GM12878 (cell line): ENCODE measurements at regions of chr1 and their contacts with region 1.

Region 1: DNA sequence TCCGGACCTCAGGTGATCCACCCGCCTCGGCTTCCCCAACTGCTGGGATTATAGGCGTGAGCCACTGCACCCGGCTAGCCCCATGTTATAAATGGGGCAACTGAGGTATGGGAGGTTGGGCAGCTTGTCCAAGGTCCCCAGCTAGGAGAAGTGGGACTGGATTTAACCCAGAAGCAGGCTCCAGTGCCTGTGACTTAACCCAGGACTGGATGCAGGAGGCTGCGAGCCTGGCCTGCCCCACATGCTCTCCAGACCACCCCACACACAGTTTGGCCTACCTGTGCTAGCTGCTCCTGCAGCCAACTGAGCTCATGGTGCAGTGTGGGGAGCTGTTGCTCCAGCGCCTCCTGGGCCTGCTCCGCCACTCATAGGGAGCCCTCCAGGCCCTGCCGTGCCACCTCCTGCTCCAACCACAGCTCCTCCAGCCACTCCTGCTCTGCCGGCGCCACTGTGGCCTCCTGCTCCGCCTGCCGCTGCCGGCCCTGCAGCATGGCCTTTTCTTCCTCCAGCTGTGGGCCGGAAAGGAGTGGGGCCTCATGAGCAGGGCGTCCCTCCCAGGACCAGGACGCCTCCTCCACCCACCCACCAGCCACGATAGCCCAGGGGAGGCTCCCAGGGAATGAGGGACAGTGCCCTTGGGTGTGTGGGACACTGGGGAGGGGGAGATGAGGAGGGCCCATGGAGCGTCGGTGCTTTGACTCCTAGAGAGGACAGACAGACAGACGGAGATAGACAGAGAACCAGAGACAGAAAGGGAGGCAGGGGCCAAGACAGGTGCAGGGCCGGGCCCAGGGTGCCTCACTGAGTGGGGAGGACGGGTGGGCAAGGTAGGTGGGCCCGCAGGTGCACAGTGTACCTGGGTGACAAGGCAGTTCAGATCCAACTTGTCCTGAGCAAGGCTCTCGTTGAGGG is 12.4 kb upstream of the NBPF1 start:
- DNase-seq: no peak
- ATAC-seq: no peak
- H3K4me3 ChIP-seq: no peak overlapping the region
- H3K27ac ChIP-seq: no peak overlapping the region
- H3K4me1 ChIP-seq: no peaks in the 10 kb centered on the region
- H3K27me3 ChIP-seq: no peaks in the 10 kb centered on the region
- CTCF ChIP-seq: no peak
- EP300 ChIP-seq: no peak
- POLR2A ChIP-seq: peak; percentile 39; the same call in 1 of the 2 replicates
- RAD21 ChIP-seq: no peak

Region 2: GRCh38 chr1:16498573-16499413 is 127.0 kb before region 1 on chr1:
- CTCF ChIA-PET with region 1: no interaction called
- POLR2A ChIA-PET with region 1: no interaction called
- RAD21 ChIA-PET with region 1: no interaction called
- SMC1A ChIA-PET with region 1: no interaction called
- in situ Hi-C with region 1: no loop called
- intact Hi-C with region 1: no loop called
- DNase-seq: peak; percentile 32
- ATAC-seq: peak; percentile 98
- H3K4me3 ChIP-seq: peak overlapping the region; percentile 87
- H3K27ac ChIP-seq: no peak overlapping the region
- H3K4me1 ChIP-seq: peaks cover 3% of the 10 kb centered on the region; the same call in 1 of the 2 replicates
- H3K27me3 ChIP-seq: no peaks in the 10 kb centered on the region; a peak in 1 of 4 replicates
- CTCF ChIP-seq: peak in 1 of 3 experiments; percentile 26; a peak in 2 of 6 replicates
- EP300 ChIP-seq: no peak
- POLR2A ChIP-seq: peak; percentile 61; the same call in 1 of the 2 replicates
- RAD21 ChIP-seq: no peak

Region 3: DNA sequence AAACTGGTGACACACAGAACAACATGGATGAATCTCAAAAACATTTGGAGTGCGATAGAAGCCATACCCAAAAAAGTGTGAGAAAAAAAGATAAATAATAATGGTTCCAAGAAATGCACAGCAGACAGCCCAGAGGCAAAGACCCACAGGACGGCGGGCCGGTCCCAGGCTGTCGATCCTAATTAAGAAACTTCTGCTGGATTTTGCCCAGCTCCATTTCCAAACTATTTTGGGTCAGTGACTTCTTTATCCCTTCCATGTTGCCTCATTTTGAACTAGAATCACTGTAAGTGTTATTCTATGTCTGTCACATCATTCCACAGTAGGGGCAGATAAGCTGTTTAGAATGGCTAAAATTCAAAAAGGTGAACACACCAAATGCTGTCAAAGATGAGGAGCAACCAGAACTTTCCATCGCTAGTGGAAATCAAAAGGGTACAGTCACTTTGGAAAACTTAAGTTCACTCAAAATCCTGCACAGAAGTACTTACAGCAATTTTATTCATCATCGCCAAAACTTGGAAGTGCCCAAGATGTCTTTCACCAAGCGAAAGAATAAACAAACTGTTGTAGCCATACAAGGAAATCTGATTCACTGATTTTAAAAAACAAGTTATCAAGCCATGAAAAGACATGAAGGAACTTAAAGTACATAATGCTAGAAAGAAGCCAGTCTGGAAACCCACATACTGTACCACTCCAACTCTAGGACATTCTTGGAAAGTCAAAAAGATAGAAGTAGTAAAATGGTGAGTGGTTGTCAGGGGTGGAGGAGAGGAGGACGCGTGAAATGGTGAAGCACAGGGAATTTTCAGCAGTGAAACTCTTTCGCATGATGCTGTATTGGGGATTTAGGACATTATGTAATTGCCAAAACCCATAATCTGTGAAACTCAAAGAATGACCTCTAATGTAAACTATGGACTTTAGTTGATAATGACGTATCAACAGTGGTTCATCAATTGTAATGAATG is 19.9 kb before region 1 on chr1:
- CTCF ChIA-PET with region 1: interaction called, 18 read pairs
- POLR2A ChIA-PET with region 1: interaction called, 3 read pairs
- RAD21 ChIA-PET with region 1: interaction called, 3 read pairs
- SMC1A ChIA-PET with region 1: interaction called, 16 read pairs
- in situ Hi-C with region 1: no loop called
- intact Hi-C with region 1: no loop called
- DNase-seq: no peak
- ATAC-seq: no peak
- H3K4me3 ChIP-seq: no peak overlapping the region
- H3K27ac ChIP-seq: no peak overlapping the region
- H3K4me1 ChIP-seq: no peaks in the 10 kb centered on the region
- H3K27me3 ChIP-seq: no peaks in the 10 kb centered on the region
- CTCF ChIP-seq: no peak
- EP300 ChIP-seq: no peak
- POLR2A ChIP-seq: no peak
- RAD21 ChIP-seq: no peak

Region 4: DNA sequence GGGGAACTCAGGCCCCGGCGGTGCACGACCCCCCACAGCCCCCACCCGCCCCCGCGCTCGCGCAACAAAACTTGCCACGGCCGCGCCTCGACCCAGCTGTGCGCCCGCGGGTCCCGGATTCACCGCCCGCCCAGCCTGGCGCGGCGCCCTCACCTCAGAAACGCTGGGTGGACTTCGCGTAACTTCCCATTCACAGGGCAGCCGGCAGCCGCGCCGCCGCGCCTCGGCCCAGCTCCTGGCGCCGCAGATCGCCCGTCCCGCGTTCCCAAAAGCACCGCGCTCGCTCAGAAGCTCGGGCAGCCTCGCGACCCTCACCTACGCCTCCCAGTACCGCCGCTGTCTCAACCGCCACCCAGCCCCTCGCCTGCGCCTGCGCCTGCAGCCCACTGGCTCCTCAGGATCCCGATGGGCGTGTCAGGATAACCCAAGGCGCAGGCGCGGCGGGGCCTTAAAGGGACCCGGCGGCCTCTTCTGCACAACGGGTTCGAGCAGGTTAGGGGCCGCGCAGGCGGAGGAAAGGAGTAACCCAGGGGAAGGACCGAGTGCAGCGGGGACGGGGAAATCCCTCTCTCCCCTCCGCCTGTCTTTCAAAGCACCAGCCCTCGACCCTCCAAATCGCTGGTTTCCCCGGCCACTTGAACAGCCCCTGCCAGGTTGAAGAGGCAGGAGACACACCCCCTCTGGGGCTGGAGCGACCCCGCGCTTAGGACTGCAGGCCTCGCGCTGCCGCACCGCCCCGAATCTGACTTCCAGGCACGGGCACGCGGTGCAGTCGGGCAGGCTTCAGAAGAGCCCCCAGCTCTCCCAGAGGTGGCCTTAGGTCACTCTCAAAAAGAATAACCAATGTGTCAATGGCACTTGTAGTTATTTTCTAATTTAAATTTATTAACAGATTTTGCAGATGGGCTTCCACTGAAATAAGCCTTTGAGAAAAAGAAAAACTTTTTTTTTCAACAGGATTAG is 12.3 kb before region 1 on chr1 and contains the start of gene NBPF1:
- CTCF ChIA-PET with region 1: interaction called, 23 read pairs
- POLR2A ChIA-PET with region 1: interaction called, 4 read pairs
- RAD21 ChIA-PET with region 1: interaction called, 3 read pairs
- SMC1A ChIA-PET with region 1: interaction called, 16 read pairs
- in situ Hi-C with region 1: no loop called
- intact Hi-C with region 1: no loop called
- DNase-seq: peak; percentile 56
- ATAC-seq: peak; percentile 99
- H3K4me3 ChIP-seq: peak within 1 kb of the TSS; percentile 73
- H3K27ac ChIP-seq: no peak within 1 kb of the TSS
- H3K4me1 ChIP-seq: peaks cover 4% of the 10 kb centered on the region
- H3K27me3 ChIP-seq: peaks cover 13 to 18% of the 10 kb centered on the region in 2 experiments
- CTCF ChIP-seq: peak in 1 of 3 experiments; percentile 7; a peak in 1 of 6 replicates
- EP300 ChIP-seq: no peak
- POLR2A ChIP-seq: peak; percentile 74; the same call in 1 of the 2 replicates
- RAD21 ChIP-seq: no peak
- polyA plus RNA-seq, gene NBPF1: 0.20 to 0.34 TPM

Region 5: GRCh38 chr1:16946646-16947045 is 320.9 kb after region 1 on chr1:
- CTCF ChIA-PET with region 1: interaction called, 40 read pairs
- POLR2A ChIA-PET with region 1: no interaction called
- RAD21 ChIA-PET with region 1: interaction called, 33 read pairs
- SMC1A ChIA-PET with region 1: interaction called, 9 read pairs
- in situ Hi-C with region 1: no loop called
- intact Hi-C with region 1: loop called (anchors 1 kb)
- DNase-seq: no peak
- ATAC-seq: no peak
- H3K4me3 ChIP-seq: no peak overlapping the region
- H3K27ac ChIP-seq: no peak overlapping the region
- H3K4me1 ChIP-seq: no peaks in the 10 kb centered on the region
- H3K27me3 ChIP-seq: no peaks in the 10 kb centered on the region
- CTCF ChIP-seq: no peak
- EP300 ChIP-seq: no peak
- POLR2A ChIP-seq: no peak
- RAD21 ChIP-seq: no peak

Region 6: DNA sequence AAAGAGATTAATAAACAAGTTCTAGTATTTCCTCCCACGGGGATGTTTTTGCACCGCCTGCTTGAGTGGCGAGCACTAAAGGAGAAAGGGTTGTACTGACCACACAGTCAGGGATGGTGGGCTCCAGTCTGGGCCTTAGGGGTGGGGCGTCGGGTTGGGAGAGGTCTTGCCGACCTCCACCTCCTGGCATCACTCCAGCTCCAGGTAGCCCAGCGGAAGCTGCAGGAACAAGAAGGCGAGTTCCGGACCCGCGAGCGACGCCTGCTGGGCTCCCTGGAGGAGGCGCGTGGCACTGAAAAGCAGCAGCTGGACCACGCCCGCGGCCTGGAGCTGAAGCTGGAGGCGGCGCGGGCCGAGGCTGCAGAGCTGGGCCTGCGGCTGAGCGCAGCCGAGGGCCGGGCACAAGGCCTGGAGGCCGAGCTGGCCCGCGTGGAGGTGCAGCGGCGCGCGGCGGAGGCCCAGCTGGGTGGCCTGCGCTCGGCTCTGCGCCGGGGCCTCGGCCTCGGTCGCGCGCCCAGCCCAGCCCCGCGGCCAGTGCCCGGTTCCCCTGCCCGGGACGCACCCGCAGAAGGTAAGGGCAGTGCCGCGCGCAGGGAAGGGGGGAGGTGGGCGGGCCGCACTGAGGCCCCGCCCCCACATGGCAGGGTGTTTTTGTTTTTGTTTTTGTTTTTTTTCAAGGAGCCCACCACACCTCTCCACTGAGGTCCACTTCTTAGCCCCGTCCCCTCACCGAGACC is 335.0 kb after region 1 on chr1:
- CTCF ChIA-PET with region 1: interaction called, 33 read pairs
- POLR2A ChIA-PET with region 1: no interaction called
- RAD21 ChIA-PET with region 1: interaction called, 16 read pairs
- SMC1A ChIA-PET with region 1: interaction called, 4 read pairs
- in situ Hi-C with region 1: no loop called
- intact Hi-C with region 1: no loop called
- DNase-seq: peak; percentile 7
- ATAC-seq: peak; percentile 95
- H3K4me3 ChIP-seq: peak overlapping the region; percentile 43; the same call in 1 of the 2 replicates
- H3K27ac ChIP-seq: no peak overlapping the region
- H3K4me1 ChIP-seq: no peaks in the 10 kb centered on the region
- H3K27me3 ChIP-seq: no peaks in the 10 kb centered on the region
- CTCF ChIP-seq: peak; percentile 69 to 85 (median 70)
- EP300 ChIP-seq: no peak
- POLR2A ChIP-seq: no peak
- RAD21 ChIP-seq: peak; percentile 44

Region 7: DNA sequence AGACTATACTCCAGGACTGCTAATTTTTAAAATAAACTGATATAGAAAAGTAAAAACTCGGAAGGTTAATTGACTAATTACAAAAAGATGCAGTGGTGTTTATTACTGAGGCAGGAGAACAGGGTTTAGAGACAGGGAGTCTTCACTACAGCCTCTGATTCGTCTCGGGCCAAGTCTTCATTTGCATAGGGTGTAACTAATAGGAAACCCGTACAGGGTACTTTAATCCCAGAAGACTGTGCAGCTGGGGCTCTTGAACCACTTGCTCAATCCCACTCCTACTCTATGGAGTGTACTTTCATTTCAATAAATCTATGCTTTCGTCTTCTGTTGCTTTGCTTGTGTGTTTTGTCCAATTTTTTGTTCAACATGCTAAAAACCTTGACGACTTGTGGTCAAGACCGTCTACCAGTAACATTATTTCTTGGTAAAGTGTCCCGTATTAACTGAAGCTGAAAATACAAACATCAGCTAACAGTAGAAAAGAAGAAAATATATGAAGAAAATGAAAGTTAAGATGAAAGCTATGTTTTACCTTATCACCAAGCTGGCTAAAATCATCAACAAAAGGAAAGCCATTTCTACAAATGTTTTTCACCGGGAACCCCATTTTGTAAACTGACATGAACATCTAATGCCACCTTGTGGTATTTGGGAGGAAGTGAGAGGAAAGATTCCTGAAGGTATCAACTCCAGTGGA is 420.0 kb after region 1 on chr1:
- CTCF ChIA-PET with region 1: interaction called, 13 read pairs
- POLR2A ChIA-PET with region 1: no interaction called
- RAD21 ChIA-PET with region 1: interaction called, 5 read pairs
- SMC1A ChIA-PET with region 1: interaction called, 4 read pairs
- in situ Hi-C with region 1: loop called (anchors 5 kb)
- intact Hi-C with region 1: loop called (anchors 5 kb)
- DNase-seq: no peak
- ATAC-seq: peak; percentile 62
- H3K4me3 ChIP-seq: 0 out of 2 replicates have a peak overlapping the region, but pooled peaks have one; percentile 40
- H3K27ac ChIP-seq: no peak overlapping the region
- H3K4me1 ChIP-seq: peaks cover 3% of the 10 kb centered on the region; the same call in 1 of the 2 replicates
- H3K27me3 ChIP-seq: no peaks in the 10 kb centered on the region
- CTCF ChIP-seq: peak; percentile 55 to 76 (median 72); a peak in 5 of 6 replicates
- EP300 ChIP-seq: no peak
- POLR2A ChIP-seq: no peak
- RAD21 ChIP-seq: peak; percentile 80